CD8-positive, alpha-beta T cell (primary cell): ENCODE measurements at regions of chr4 and their contacts with region 1.

Region 1: GRCh38 chr4:140237606-140237986 is 83.6 kb upstream of the MAML3 start:
- DNase-seq: no peak
- ATAC-seq: no peak
- H3K4me3 ChIP-seq: no peak overlapping the region
- H3K4me3 Mint-ChIP-seq: no peak overlapping the region
- H3K27ac ChIP-seq: no peak overlapping the region
- H3K27ac Mint-ChIP-seq: no peak overlapping the region
- H3K4me1 ChIP-seq: peaks cover 12% of the 10 kb centered on the region
- H3K4me1 Mint-ChIP-seq: peaks cover 21% of the 10 kb centered on the region
- H3K27me3 ChIP-seq: no peaks in the 10 kb centered on the region
- H3K27me3 Mint-ChIP-seq: peaks cover 3% of the 10 kb centered on the region
- CTCF ChIP-seq: no peak

Region 2: GRCh38 chr4:140185412-140186081 is 52.0 kb before region 1 on chr4:
- CTCF ChIA-PET with region 1: no interaction called
- POLR2A ChIA-PET with region 1: no interaction called
- intact Hi-C with region 1: no loop called
- DNase-seq: no peak
- ATAC-seq: no peak
- H3K4me3 ChIP-seq: no peak overlapping the region
- H3K4me3 Mint-ChIP-seq: no peak overlapping the region
- H3K27ac ChIP-seq: no peak overlapping the region
- H3K27ac Mint-ChIP-seq: no peak overlapping the region
- H3K4me1 ChIP-seq: no peaks in the 10 kb centered on the region
- H3K4me1 Mint-ChIP-seq: no peaks in the 10 kb centered on the region
- H3K27me3 ChIP-seq: no peaks in the 10 kb centered on the region
- H3K27me3 Mint-ChIP-seq: no peaks in the 10 kb centered on the region
- CTCF ChIP-seq: no peak

Region 3: GRCh38 chr4:140195806-140196205 is 41.8 kb before region 1 on chr4:
- CTCF ChIA-PET with region 1: interaction called, 3 read pairs
- POLR2A ChIA-PET with region 1: no interaction called
- intact Hi-C with region 1: loop called in 1 of 2 experiments (anchors 2 kb)
- DNase-seq: no peak
- ATAC-seq: no peak
- H3K4me3 ChIP-seq: no peak overlapping the region
- H3K4me3 Mint-ChIP-seq: no peak overlapping the region
- H3K27ac ChIP-seq: no peak overlapping the region
- H3K27ac Mint-ChIP-seq: no peak overlapping the region
- H3K4me1 ChIP-seq: no peaks in the 10 kb centered on the region
- H3K4me1 Mint-ChIP-seq: no peaks in the 10 kb centered on the region
- H3K27me3 ChIP-seq: no peaks in the 10 kb centered on the region
- H3K27me3 Mint-ChIP-seq: no peaks in the 10 kb centered on the region
- CTCF ChIP-seq: no peak